Aorta (tissue), 5 donors: ENCODE measurements at regions of chr17 and their contacts with region 1.

Region 1: GRCh38 chr17:7561028-7561575 is 617 bp upstream of the SENP3 start:
- DNase-seq: peak; percentile 94 to 97
- ATAC-seq: peak; percentile 89
- H3K4me3 ChIP-seq: peak overlapping the region; percentile 68 to 77
- H3K27ac ChIP-seq: peak overlapping the region; percentile 44 to 64
- H3K4me1 ChIP-seq: no peaks in the 10 kb centered on the region
- H3K27me3 ChIP-seq: no peaks in the 10 kb centered on the region

Region 2: DNA sequence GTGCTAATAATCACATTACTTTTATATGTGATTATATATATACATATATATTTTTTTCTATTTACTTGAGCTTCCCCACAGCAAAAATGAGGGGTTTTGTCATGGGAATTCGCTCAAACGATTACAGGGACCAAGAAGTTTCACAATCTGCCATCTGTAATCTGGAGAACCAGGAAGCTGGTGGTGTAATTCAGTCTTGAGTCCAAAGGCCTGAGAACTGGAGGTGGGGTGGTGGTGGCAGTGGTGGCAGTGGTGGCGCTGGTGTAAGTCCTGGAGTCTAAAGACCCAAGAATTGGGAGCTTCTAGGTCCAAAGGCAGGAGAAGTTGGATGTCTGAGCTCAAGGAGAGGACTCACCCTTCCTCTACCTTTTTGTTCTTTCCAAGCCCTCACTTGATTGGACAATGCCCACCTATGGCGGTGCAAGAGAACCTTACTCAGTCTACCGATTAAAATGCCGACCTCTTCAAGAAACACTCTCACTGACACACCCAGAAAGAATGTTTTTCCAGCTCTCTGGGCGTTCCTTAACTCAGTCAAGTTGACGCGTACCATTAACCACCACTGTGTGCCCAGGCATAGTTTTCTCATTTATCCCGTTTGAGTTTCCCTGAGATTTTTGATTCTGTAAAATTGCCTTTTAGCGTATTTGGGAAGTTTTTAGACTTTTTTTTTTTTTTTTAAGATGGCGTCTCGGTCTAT is 45.0 kb before region 1 on chr17:
- intact Hi-C with region 1: loop called (anchors 1 kb)
- DNase-seq: no peak
- ATAC-seq: no peak
- H3K4me3 ChIP-seq: no peak overlapping the region
- H3K27ac ChIP-seq: no peak overlapping the region
- H3K4me1 ChIP-seq: no peaks in the 10 kb centered on the region
- H3K27me3 ChIP-seq: no peaks in the 10 kb centered on the region